Cardiac septum (tissue), 1 donor: ENCODE measurements at regions of chr5 and their contacts with region 1.

Region 1: GRCh38 chr5:157511651-157512644 is 51.9 kb downstream of the NIPAL4 start:
- DNase-seq: peak; percentile 92

Region 2: GRCh38 chr5:157563373-157563928 is 51.5 kb after region 1 on chr5:
- intact Hi-C with region 1: loop called (anchors 5 kb)
- DNase-seq: no peak

Region 3: GRCh38 chr5:157575381-157576020 is 63.6 kb after region 1 on chr5 and contains the start of gene ADAM19:
- intact Hi-C with region 1: loop called (anchors 5 kb)
- DNase-seq: peak; percentile 84
- total RNA-seq, gene ADAM19: 97.1 TPM